Activated T-helper 2 cell treated with anti-CD3 and anti-CD28 coated beads, Interferon-gamma antibody, Interleukin-2, Interleukin-4, amounts not matched to agents 10 μg/mL and 5 μg/mL and 100 μg/mL, durations not matched to agents 14 hours and 24 hours and 36 hours (primary cell): ENCODE measurements at regions of chr17 and their contacts with region 1.

Region 1: DNA sequence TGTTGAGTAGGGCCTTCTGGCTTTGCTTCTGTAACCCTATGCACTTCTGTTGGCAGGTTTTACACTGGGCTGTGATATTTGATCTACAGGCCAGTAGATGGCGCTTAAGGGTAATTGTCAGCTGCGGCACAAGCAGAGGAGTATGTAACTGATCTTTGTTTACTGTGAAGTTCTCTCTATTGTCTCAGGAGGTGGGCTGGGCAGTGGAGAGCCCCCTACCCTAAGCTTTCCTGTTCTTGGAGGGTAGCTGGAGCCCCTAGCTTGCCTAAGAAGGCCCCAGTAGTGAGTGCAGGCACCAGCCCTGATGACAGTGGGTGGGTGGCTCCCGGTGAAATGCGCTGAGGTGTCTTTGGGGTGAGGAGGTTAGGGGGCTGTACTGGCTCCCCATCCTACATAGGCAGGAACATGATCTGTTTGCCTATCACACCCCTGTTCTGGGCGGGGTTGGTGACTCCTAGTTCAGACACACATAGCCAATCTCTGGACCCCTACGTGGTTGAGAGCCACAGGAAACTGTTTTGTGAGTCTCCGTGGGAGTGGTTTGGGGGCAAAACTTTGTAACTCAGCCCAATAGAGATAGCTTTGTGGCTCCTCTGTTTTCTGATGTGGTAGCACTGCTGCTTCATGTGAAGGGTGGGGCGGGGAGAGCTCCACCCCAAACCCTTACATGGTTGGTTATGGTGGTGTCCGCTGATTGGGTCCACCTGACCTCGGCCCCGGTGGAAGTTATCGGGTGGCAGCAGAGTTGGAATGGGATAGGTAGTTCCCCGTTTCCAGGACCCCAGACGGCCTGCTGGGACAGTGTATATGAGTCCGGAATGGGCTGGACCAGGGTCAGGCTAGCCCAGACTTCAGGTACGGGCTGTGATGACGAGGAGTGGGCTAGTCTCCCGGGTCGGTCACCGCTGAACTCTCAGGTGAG is 60.4 kb downstream of the SLFN11 start:
- DNase-seq: peak; percentile 83
- H3K4me3 Mint-ChIP-seq: peak overlapping the region; percentile 92
- H3K27ac Mint-ChIP-seq: peak overlapping the region; percentile 94
- H3K4me1 Mint-ChIP-seq: peaks cover 46% of the 10 kb centered on the region
- H3K27me3 Mint-ChIP-seq: no peaks in the 10 kb centered on the region

Region 2: DNA sequence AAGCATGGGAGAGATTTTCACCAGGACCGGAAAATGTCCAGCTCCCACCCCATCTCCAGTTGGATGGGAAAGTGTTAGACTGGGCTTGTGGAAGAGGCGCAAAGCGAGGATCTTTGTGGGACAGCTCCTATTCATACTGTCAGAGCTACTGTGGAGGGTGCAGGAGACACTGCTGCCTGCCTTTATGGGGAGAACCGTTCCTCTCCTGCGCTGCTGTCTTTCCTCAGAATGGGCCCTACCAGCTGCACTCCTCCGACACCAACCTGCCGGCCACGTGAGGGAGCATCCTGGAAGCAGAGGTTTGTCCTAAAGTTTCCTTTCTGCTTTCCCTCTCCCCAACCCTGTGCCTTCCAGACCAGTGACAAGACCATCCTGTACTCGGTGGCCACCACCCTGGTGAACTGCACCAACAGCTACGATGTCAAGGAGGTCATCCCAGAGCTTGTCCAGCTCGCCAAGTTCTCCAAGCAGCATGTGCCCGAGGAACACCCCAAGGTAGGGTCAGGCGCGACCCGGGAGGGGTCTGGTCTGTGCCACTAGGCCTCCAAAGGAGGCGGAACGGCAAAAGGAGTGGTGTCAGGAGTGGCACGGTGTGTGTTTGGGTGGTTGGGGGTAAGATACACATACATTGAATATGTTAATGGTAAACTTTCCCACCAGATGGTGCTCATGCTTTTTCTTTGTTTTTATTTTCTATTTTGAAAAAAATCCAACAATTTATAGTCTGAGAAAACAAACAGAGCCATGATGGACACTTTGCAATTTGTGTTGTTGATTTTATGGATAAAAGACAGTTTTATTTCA is 141.9 kb before region 1 on chr17:
- intact Hi-C with region 1: loop called (anchors 5 kb)
- DNase-seq: no peak
- H3K4me3 Mint-ChIP-seq: no peak overlapping the region
- H3K27ac Mint-ChIP-seq: no peak overlapping the region
- H3K4me1 Mint-ChIP-seq: peaks cover 28% of the 10 kb centered on the region
- H3K27me3 Mint-ChIP-seq: no peaks in the 10 kb centered on the region

Region 3: GRCh38 chr17:35373534-35373983 is 60.5 kb after region 1 on chr17 and contains the start of gene SLFN11:
- intact Hi-C with region 1: loop called (anchors 2 kb)
- DNase-seq: peak; percentile 81
- H3K4me3 Mint-ChIP-seq: peak within 1 kb of the TSS; percentile 96
- H3K27ac Mint-ChIP-seq: peak within 1 kb of the TSS; percentile 96
- H3K4me1 Mint-ChIP-seq: peaks cover 56% of the 10 kb centered on the region
- H3K27me3 Mint-ChIP-seq: peaks cover 3% of the 10 kb centered on the region
- total RNA-seq, gene SLFN11: 112 and 114 TPM in 2 replicates

Region 4: GRCh38 chr17:35448214-35448898 is 135.3 kb after region 1 on chr17 and contains the start of gene SLFN13:
- intact Hi-C with region 1: loop called (anchors 5 kb)
- DNase-seq: peak; percentile 83
- H3K4me3 Mint-ChIP-seq: peak within 1 kb of the TSS; percentile 65
- H3K27ac Mint-ChIP-seq: peak within 1 kb of the TSS; percentile 79
- H3K4me1 Mint-ChIP-seq: peaks cover 16% of the 10 kb centered on the region
- H3K27me3 Mint-ChIP-seq: no peaks in the 10 kb centered on the region
- total RNA-seq, gene SLFN13: 41.9 and 42.6 TPM in 2 replicates

Region 5: GRCh38 chr17:35587074-35587971 is 274.3 kb after region 1 on chr17 and contains the start of gene AP2B1:
- intact Hi-C with region 1: loop called (anchors 10 kb)
- DNase-seq: peak; percentile 96
- H3K4me3 Mint-ChIP-seq: peak within 1 kb of the TSS; percentile 94
- H3K27ac Mint-ChIP-seq: peak within 1 kb of the TSS; percentile 96
- H3K4me1 Mint-ChIP-seq: peaks cover 30% of the 10 kb centered on the region
- H3K27me3 Mint-ChIP-seq: peaks cover 7% of the 10 kb centered on the region
- total RNA-seq, gene AP2B1: 177 and 194 TPM in 2 replicates